ENCODE measurements at regions of chr19 and their contacts with region 1.

Region 1: GRCh38 chr19:2578901-2579677 is 103.2 kb downstream of the GADD45B start:
- DNase-seq: peak; percentile 91
- H3K4me3 ChIP-seq: peak overlapping the region; percentile 31 to 37
- H3K27ac ChIP-seq: peak overlapping the region; percentile 78 to 83
- H3K4me1 ChIP-seq: peaks cover 15% of the 10 kb centered on the region
- H3K27me3 ChIP-seq: no peaks in the 10 kb centered on the region
- CTCF ChIP-seq: peak; percentile 86 to 99 (median 97)
- POLR2A ChIP-seq: no peak

Region 2: GRCh38 chr19:2461751-2462634 is 117.1 kb before region 1 on chr19:
- intact Hi-C with region 1: no loop called
- DNase-seq: no peak
- H3K4me3 ChIP-seq: peak overlapping the region; percentile 33 to 45
- H3K27ac ChIP-seq: peak overlapping the region; percentile 4 to 47
- H3K4me1 ChIP-seq: peaks cover 11% of the 10 kb centered on the region
- H3K27me3 ChIP-seq: no peaks in the 10 kb centered on the region
- CTCF ChIP-seq: no peak
- POLR2A ChIP-seq: no peak

Region 3: DNA sequence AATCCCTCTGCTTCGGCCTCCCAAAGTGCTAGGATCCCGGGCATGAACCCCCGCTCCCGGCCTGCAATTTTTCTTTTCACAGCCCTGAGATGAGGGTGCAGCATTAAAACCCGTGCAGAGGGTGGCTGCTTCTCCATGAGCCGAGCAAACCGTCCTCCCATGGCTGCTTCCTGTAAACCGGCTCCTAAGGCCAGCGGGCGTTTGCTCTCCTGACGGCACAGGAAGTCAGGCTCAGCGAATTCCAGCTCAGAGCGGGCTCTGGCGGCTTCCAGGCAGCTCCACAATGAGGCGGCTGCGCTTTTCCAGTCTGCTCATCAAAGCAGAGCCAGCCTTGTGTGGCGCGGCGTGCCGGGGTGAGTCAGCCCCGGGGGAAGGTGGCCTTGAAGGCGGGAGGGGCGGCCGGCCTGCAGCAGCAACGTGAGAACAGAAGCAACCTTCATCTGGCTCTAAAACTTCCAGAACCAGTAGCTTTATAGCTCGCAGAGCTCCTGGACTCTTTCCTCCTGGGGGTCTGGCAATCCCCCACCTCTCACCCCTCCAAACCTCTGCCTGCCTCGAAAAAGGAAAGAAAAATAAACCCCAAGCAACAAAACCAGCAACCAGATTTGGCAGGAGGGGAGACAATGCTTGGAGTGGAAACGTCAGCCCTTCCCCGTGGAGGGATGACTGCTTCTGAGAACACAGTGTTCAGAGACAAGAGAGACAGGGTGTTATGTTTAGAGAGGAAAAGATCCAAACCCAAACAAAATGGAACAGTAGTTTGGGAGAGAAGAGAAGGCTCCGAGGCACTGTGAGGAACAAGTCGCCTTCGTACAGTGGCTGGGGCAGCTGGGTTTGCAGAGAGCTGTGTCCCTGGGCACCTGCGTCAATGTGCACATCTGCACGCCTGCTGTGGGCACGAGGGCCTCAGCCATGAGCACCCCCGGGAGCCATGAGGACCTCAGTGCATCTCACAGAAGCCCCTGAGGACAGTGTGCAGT is 35.3 kb before region 1 on chr19:
- intact Hi-C with region 1: loop called (anchors 2 kb)
- DNase-seq: peak; percentile 91
- H3K4me3 ChIP-seq: peak overlapping the region in 1 of 2 donors; percentile 10
- H3K27ac ChIP-seq: peak overlapping the region; percentile 88 to 92
- H3K4me1 ChIP-seq: peaks cover 44% of the 10 kb centered on the region
- H3K27me3 ChIP-seq: no peaks in the 10 kb centered on the region
- CTCF ChIP-seq: peak in 2 of 4 experiments; percentile 30 to 48
- POLR2A ChIP-seq: peak; percentile 38

Region 4: DNA sequence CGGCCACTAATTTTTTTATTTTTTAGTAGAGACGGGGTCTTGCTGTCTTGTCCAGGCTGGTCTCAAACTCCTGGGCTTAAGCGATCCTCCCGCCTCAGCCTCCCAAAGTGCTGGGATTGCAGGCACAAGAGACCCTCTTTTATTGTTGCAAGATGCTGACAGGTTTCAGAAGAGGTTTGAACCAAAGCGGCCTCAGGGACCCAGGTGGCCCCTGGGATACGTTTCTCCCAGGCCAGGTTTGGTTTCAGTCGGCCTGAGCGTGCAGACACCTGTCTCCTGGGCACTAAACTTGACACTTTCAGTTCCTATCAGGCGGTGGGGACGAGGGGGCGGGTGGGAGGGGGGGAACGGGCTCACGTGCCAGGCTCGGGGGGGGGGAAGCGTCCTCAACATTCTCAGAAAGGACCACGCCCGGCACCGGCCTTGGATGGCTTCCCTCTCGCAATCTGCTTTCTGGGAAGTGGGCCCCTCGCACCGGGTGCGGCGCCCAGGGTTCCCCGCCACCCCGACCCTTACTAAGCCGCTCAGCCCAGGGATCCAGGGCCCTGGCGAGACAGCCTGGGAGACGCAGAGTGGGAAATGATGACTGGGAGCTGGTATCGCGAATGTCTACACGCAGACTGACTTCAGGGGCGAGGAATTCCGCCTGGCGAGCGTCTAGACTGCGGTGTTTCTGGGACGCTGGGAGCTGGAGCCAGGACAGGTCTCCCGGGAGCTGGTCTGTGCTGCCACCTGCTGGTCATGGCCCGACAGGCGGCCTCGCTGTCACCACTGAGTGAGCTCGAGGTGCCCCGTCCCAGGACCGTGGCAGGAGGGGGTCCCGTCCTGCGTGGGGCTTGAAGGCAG is 31.8 kb after region 1 on chr19:
- intact Hi-C with region 1: loop called (anchors 1 kb)
- DNase-seq: peak; percentile 91
- H3K4me3 ChIP-seq: peak overlapping the region; percentile 28 to 41
- H3K27ac ChIP-seq: peak overlapping the region; percentile 77 to 83
- H3K4me1 ChIP-seq: no peaks in the 10 kb centered on the region
- H3K27me3 ChIP-seq: no peaks in the 10 kb centered on the region
- CTCF ChIP-seq: peak; percentile 92 to 99 (median 98)
- POLR2A ChIP-seq: peak; percentile 16

Region 5: DNA sequence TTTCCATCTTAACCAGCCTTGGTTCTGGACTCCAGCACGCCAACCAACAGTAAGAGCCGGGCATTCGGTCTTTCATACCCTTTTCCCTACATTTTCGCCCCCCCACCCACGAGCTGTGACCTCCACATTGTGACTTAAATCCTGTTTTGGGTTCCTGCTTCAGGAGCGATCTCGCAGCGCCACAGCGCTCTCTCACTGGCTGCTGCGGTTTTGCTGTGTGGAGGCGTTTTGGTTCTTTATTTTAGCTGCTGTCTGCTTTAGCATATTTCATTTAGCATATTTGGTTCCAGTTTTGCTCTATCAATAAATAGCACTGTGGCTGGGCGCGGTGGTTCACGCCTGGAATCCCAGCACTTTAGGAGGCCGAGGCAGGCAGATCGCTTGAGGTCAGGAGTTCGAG is 180.3 kb after region 1 on chr19:
- intact Hi-C with region 1: no loop called
- DNase-seq: no peak
- H3K4me3 ChIP-seq: no peak overlapping the region
- H3K27ac ChIP-seq: no peak overlapping the region
- H3K4me1 ChIP-seq: no peaks in the 10 kb centered on the region
- H3K27me3 ChIP-seq: no peaks in the 10 kb centered on the region
- CTCF ChIP-seq: no peak
- POLR2A ChIP-seq: no peak

Region 6: GRCh38 chr19:3154957-3155736 is 576.1 kb after region 1 on chr19:
- intact Hi-C with region 1: no loop called
- DNase-seq: peak; percentile 57
- H3K4me3 ChIP-seq: no peak overlapping the region
- H3K27ac ChIP-seq: peak overlapping the region; percentile 37 to 41
- H3K4me1 ChIP-seq: no peaks in the 10 kb centered on the region
- H3K27me3 ChIP-seq: no peaks in the 10 kb centered on the region
- CTCF ChIP-seq: no peak
- POLR2A ChIP-seq: no peak